OCI-LY7 (cell line): ENCODE measurements at regions of chr10 and their contacts with region 1.

Region 1: GRCh38 chr10:113854011-113854760 is at the starts of genes DCLRE1A and NHLRC2:
- DNase-seq: peak; percentile 87
- H3K4me3 ChIP-seq: peak within 1 kb of the TSS; percentile 98
- H3K27ac ChIP-seq: peak within 1 kb of the TSS; percentile 76
- H3K4me1 ChIP-seq: peaks cover 66% of the 10 kb centered on the region
- CTCF ChIP-seq: no peak
- total RNA-seq, gene DCLRE1A: 11.5 and 12.3 TPM in 2 replicates
- total RNA-seq, gene NHLRC2: 28.6 and 64.1 TPM in 2 replicates

Region 2: GRCh38 chr10:113958631-113959382 is 104.6 kb after region 1 on chr10:
- CTCF ChIA-PET with region 1: no interaction called
- POLR2A ChIA-PET with region 1: interaction called, 3 read pairs
- intact Hi-C with region 1: loop called (anchors 2 kb)
- DNase-seq: no peak
- H3K4me3 ChIP-seq: no peak overlapping the region
- H3K27ac ChIP-seq: peak overlapping the region; percentile 88
- H3K4me1 ChIP-seq: peaks cover 51% of the 10 kb centered on the region
- CTCF ChIP-seq: no peak

Region 3: DNA sequence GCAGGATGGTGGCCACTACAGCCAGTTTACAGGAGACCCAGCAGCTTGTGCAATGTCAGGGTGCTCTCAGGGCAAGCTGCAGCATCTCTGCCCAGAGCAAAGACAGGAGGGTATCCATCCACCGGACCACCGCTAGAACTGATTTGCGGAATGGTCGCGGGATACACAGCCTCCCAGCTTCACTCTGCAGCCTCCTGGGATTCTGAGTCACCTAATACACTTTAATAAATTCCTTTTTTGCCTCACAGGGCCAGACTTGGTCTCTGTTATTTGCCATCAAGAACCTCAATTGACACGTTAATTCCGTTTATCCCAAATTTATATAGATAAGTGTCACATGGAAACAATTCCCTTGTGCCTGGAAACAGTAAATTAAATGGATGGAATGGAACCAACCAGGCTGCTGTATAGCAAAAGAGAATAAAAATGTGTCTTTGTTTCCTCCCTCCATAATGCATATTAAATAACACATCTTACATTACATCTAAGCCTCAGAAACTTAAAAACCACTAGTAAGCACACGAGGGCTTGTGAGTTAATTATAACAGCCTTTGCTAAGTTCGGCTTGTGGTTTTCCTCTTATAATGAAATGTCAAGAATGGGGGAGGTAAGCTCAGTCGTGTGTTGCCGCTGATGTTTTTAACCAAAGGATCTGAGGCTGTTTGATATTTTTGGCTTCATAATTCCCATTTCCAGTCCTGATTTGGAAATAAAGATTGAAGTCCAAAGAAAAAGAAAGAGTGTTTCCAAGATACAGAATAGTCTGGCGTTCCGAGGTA is 241.6 kb after region 1 on chr10:
- CTCF ChIA-PET with region 1: no interaction called
- POLR2A ChIA-PET with region 1: interaction called, 5 read pairs
- intact Hi-C with region 1: loop called (anchors 5 kb)
- DNase-seq: peak; percentile 80
- H3K4me3 ChIP-seq: peak overlapping the region; percentile 52
- H3K27ac ChIP-seq: peak overlapping the region; percentile 48
- H3K4me1 ChIP-seq: peaks cover 52% of the 10 kb centered on the region
- CTCF ChIP-seq: no peak

Region 4: GRCh38 chr10:114388275-114388674 is 534.1 kb after region 1 on chr10:
- CTCF ChIA-PET with region 1: no interaction called
- POLR2A ChIA-PET with region 1: no interaction called
- intact Hi-C with region 1: no loop called
- DNase-seq: no peak
- H3K4me3 ChIP-seq: no peak overlapping the region
- H3K27ac ChIP-seq: no peak overlapping the region
- H3K4me1 ChIP-seq: no peaks in the 10 kb centered on the region
- CTCF ChIP-seq: no peak

Region 5: DNA sequence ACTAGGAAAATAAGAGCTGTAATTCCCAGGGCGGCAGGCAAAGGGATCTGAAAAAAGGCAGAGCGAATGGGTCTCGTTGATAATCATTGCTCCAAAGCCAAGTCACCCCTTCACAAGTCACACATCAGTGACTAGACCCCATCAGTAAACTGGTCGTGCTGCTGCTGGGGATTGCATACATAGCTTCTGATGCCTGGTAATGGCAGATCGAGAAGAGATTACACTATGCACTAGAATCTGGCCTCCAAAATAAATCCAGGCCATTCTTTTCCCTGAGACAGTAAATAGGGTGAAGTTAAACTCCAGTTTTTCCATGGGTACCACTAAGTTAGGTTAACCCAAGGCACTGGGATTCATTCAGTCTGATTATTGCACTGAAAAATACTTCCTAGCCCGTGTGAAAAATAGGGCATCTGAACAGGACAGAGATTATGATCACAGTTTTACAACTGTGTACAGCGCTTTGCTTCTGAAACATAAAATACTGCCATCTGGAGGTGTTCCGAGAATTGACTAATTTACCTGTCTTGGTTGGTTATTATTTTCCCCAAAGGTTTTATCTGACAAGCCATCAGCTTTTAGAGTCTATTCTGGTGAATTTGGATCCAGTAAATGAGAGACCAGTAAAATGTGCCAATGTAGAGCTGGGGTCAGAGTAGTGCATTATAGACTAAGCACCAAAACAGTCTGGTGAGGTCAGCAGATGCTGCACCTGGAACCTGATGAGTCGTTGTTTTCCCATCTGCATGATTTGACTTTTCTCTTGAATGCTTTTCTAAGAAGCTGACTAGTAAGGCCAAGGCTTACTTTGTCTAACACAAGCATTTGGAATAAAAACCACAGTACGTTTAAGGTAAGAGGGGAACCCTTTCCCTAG is 633.0 kb after region 1 on chr10:
- CTCF ChIA-PET with region 1: no interaction called
- POLR2A ChIA-PET with region 1: no interaction called
- intact Hi-C with region 1: loop called (anchors 2 kb)
- DNase-seq: no peak
- H3K4me3 ChIP-seq: no peak overlapping the region
- H3K27ac ChIP-seq: no peak overlapping the region
- H3K4me1 ChIP-seq: peaks cover 51% of the 10 kb centered on the region
- CTCF ChIP-seq: peak; percentile 73